B cell (primary cell): ENCODE measurements at regions of chrX and their contacts with region 1.

Region 1: DNA sequence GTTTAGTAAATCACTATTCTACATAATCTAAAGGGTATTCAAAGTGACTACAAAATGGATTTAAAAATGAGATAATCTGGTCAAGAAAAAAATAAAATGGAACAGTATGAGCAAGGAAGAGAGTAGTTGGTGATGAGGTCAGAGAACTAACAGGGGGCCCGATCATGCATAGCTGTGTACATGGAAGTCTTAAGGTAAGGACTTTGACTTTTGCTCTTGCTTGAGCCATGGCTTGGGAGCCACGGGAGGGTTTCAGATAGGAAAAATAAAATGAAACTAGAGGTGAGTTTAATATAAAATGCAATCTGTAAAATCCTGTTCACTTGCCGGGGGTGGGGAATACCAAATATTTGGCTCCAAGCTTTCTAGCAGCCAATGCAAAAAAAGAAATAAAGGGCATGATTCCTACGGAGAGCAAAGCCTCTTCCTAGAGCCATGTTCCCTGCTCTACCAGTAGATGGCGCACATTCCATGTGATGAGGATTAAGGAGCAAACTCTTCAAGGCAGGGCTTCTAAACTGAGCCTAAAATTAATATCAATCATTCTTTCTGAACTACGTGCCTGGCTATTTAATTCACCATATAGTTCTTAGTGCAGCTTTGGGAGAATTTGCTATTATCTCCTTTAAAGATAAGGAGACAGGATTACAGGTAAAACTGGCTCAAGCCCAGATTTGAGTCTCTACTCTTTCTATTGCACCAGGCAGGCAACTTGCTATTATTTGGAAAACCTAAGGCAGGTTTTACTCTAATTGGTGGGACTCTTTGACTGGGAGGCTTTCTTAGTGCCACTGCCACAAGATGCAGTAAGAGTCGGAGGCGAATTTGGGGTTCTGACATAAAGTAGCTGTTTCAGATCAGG is 6.8 kb upstream of the CLCN5 start:
- DNase-seq: peak; percentile 66
- ATAC-seq: peak; percentile 57
- H3K4me3 ChIP-seq: no peak overlapping the region
- H3K4me3 Mint-ChIP-seq: no peak overlapping the region
- H3K27ac ChIP-seq: no peak overlapping the region
- H3K27ac Mint-ChIP-seq: no peak overlapping the region
- H3K4me1 ChIP-seq: peaks cover under 1% of the 10 kb centered on the region in 2 donors
- H3K4me1 Mint-ChIP-seq: no peaks in the 10 kb centered on the region
- H3K27me3 ChIP-seq: no peaks in the 10 kb centered on the region
- H3K27me3 Mint-ChIP-seq: no peaks in the 10 kb centered on the region
- CTCF ChIP-seq: peak; percentile 79

Region 2: GRCh38 chrX:49884290-49884862 is 31.2 kb before region 1 on chrX:
- CTCF ChIA-PET with region 1: interaction called, 6 read pairs
- POLR2A ChIA-PET with region 1: no interaction called
- intact Hi-C with region 1: loop called (anchors 2 kb)
- DNase-seq: peak; percentile 56
- ATAC-seq: peak; percentile 25
- H3K4me3 ChIP-seq: no peak overlapping the region
- H3K4me3 Mint-ChIP-seq: no peak overlapping the region
- H3K27ac ChIP-seq: no peak overlapping the region
- H3K27ac Mint-ChIP-seq: no peak overlapping the region
- H3K4me1 ChIP-seq: peaks cover 10 to 14% of the 10 kb centered on the region in 2 donors
- H3K4me1 Mint-ChIP-seq: peaks cover 18% of the 10 kb centered on the region
- H3K27me3 ChIP-seq: no peaks in the 10 kb centered on the region
- H3K27me3 Mint-ChIP-seq: peaks cover 2% of the 10 kb centered on the region
- CTCF ChIP-seq: peak; percentile 69

Region 3: GRCh38 chrX:50081282-50081889 is 165.8 kb after region 1 on chrX:
- CTCF ChIA-PET with region 1: no interaction called
- POLR2A ChIA-PET with region 1: no interaction called
- intact Hi-C with region 1: loop called (anchors 2 kb)
- DNase-seq: peak; percentile 7
- ATAC-seq: no peak
- H3K4me3 ChIP-seq: no peak overlapping the region
- H3K4me3 Mint-ChIP-seq: no peak overlapping the region
- H3K27ac ChIP-seq: no peak overlapping the region
- H3K27ac Mint-ChIP-seq: no peak overlapping the region
- H3K4me1 ChIP-seq: peaks cover under 1 to 7% of the 10 kb centered on the region in 2 donors
- H3K4me1 Mint-ChIP-seq: peaks cover 6% of the 10 kb centered on the region
- H3K27me3 ChIP-seq: no peaks in the 10 kb centered on the region
- H3K27me3 Mint-ChIP-seq: no peaks in the 10 kb centered on the region
- CTCF ChIP-seq: no peak

Region 4: DNA sequence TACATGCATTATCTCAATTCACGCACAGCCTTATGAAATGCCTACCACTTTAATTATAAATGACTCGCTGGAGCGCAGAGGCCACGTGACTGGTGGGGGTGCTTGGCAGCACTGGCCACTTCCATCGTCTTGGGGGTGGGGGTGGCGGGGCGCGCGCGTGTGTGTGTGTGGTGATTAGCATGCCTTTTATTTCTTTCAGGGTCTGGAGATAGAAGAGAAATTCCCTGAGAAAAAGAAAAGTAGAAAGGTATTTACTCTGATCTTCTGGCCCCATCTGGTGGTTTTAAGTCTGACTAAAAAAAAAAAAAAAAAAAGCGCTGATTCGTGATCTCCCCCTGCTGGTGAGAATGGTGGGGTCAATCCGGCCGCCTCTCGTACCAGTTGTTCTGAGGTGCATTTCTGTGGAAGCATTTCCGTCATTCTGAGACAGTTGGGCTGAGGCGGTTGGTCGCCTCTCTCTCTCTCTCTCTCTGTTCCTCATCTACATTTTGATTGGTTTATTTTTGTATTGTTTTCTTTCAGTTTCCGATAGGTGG is 288.8 kb after region 1 on chrX and contains the start of gene CCNB3:
- CTCF ChIA-PET with region 1: interaction called, 12 read pairs
- POLR2A ChIA-PET with region 1: no interaction called
- intact Hi-C with region 1: loop called (anchors 1 kb)
- DNase-seq: peak; percentile 87
- ATAC-seq: peak; percentile 94
- H3K4me3 ChIP-seq: peak within 1 kb of the TSS in 4 of 5 experiments; percentile 33 to 71 (median 40)
- H3K4me3 Mint-ChIP-seq: peak within 1 kb of the TSS; percentile 77
- H3K27ac ChIP-seq: peak within 1 kb of the TSS; percentile 38 to 51
- H3K27ac Mint-ChIP-seq: peak within 1 kb of the TSS; percentile 74
- H3K4me1 ChIP-seq: peaks cover 5 to 6% of the 10 kb centered on the region in 2 donors
- H3K4me1 Mint-ChIP-seq: peaks cover 11% of the 10 kb centered on the region
- H3K27me3 ChIP-seq: no peaks in the 10 kb centered on the region
- H3K27me3 Mint-ChIP-seq: no peaks in the 10 kb centered on the region
- CTCF ChIP-seq: peak; percentile 68
- total RNA-seq, gene CCNB3: 0.07 and 0.66 TPM in 2 replicates

Region 5: DNA sequence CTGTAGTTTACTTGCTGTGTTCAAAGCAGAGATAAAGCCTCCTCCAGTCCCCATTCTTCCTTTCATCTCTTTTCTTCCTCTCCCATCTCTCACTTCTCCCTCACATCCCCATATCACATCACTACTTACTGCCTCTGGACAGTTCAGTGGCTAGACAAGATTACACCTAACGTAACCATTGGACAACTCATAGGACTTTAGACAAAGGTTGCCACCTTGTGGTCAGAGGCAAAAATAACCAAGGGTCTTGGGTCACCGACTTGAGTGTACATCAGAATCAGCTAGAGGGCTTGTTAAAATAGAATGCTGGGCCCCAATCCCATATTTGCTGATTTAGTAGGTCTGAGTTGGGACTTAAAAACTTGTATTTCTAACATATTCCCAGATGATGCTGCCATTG is 664.4 kb after region 1 on chrX:
- CTCF ChIA-PET with region 1: interaction called, 23 read pairs
- POLR2A ChIA-PET with region 1: no interaction called
- intact Hi-C with region 1: no loop called
- DNase-seq: peak; percentile 55
- ATAC-seq: peak; percentile 36
- H3K4me3 ChIP-seq: no peak overlapping the region
- H3K4me3 Mint-ChIP-seq: no peak overlapping the region
- H3K27ac ChIP-seq: no peak overlapping the region
- H3K27ac Mint-ChIP-seq: no peak overlapping the region
- H3K4me1 ChIP-seq: no peaks in the 10 kb centered on the region
- H3K4me1 Mint-ChIP-seq: no peaks in the 10 kb centered on the region
- H3K27me3 ChIP-seq: no peaks in the 10 kb centered on the region
- H3K27me3 Mint-ChIP-seq: peaks cover 6% of the 10 kb centered on the region
- CTCF ChIP-seq: peak; percentile 66